Vagina (tissue), 2 donors: ENCODE measurements at regions of chr18 and their contacts with region 1.

Region 1: GRCh38 chr18:67486534-67486933 is 30.0 kb downstream of the DSEL start:
- DNase-seq: no peak
- H3K4me3 ChIP-seq: no peak overlapping the region
- H3K27ac ChIP-seq: no peak overlapping the region
- H3K4me1 ChIP-seq: no peaks in the 10 kb centered on the region
- H3K27me3 ChIP-seq: no peaks in the 10 kb centered on the region
- CTCF ChIP-seq: no peak
- POLR2A ChIP-seq: no peak

Region 2: DNA sequence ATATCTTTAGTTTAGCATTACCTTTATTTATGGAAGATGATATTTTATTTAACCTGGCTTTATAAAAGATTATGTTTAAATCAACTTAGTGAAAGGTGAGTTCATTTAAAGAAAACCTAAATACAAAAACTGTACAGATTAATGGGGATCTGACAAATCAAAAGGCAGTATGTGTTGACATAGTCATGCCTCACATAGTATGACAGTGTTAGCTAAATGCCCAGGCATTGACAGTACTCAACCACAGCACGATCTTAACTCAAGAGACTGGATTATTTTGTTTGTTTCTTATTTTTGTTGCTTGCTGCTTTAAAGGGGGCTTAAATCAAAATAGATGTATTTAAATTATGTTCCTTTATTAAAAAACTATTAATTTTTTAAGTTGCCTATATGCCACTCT is 1922.0 kb after region 1 on chr18:
- intact Hi-C with region 1: loop called (anchors 5 kb)
- DNase-seq: no peak
- H3K4me3 ChIP-seq: no peak overlapping the region
- H3K27ac ChIP-seq: no peak overlapping the region
- H3K4me1 ChIP-seq: no peaks in the 10 kb centered on the region
- H3K27me3 ChIP-seq: no peaks in the 10 kb centered on the region
- CTCF ChIP-seq: no peak
- POLR2A ChIP-seq: no peak